Activated CD4-positive, alpha-beta memory T cell treated with anti-CD3 and anti-CD28 coated beads, Interleukin-2, amount 10 ng/mL, durations not matched to agents 7 days and 5 days (primary cell): ENCODE measurements at regions of chr7 and their contacts with region 1.

Region 1: GRCh38 chr7:4775250-4775847 is at the start of gene AP5Z1:
- DNase-seq: peak; percentile 95
- H3K4me3 Mint-ChIP-seq: peak within 1 kb of the TSS; percentile 99
- H3K27ac Mint-ChIP-seq: peak within 1 kb of the TSS; percentile 96
- H3K4me1 Mint-ChIP-seq: peaks cover 43% of the 10 kb centered on the region
- H3K27me3 Mint-ChIP-seq: no peaks in the 10 kb centered on the region
- total RNA-seq, gene AP5Z1: 57.5 to 60.6 TPM

Region 2: DNA sequence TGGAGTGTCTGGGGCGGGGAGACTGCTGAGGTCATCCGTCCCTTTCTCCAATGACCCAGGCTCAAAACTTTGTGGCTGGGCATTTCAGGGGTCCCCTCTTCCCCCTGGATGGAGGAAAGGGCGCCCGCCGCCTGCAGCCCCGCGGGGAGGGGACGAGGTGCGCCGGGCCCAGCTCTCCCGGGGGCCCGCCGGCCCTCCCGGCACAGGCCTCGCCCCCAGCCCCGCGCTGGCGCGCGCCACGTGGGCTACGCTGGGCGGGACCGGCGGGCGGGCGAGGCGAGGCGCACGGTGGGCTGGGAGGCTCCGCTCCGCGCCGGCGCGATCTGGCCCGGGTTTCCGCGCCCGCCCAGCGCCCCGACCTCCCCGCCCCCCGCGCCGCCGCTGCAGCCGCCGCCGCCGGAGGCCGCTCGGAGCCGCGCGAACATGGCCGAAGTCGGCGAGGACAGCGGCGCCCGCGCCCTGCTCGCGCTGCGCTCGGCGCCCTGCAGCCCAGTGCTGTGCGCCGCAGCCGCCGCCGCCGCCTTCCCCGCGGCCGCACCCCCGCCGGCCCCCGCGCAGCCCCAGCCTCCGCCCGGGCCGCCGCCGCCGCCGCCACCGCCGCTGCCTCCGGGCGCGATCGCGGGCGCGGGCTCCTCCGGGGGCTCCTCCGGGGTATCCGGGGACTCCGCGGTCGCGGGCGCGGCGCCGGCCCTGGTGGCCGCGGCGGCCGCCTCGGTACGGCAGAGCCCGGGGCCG is 93.3 kb before region 1 on chr7 and contains the start of gene FOXK1:
- CTCF ChIA-PET with region 1: no interaction called
- POLR2A ChIA-PET with region 1: interaction called, 23 read pairs
- DNase-seq: peak; percentile 80
- H3K4me3 Mint-ChIP-seq: peak within 1 kb of the TSS; percentile 98
- H3K27ac Mint-ChIP-seq: peak within 1 kb of the TSS; percentile 99
- H3K4me1 Mint-ChIP-seq: peaks cover 24% of the 10 kb centered on the region
- H3K27me3 Mint-ChIP-seq: no peaks in the 10 kb centered on the region
- total RNA-seq, gene FOXK1: 32.7 to 33.2 TPM

Region 3: GRCh38 chr7:4744391-4745264 is 30.7 kb before region 1 on chr7:
- CTCF ChIA-PET with region 1: interaction called, 3 read pairs
- POLR2A ChIA-PET with region 1: interaction called, 79 read pairs
- DNase-seq: peak; percentile 81
- H3K4me3 Mint-ChIP-seq: peak overlapping the region; percentile 85
- H3K27ac Mint-ChIP-seq: peak overlapping the region; percentile 98
- H3K4me1 Mint-ChIP-seq: peaks cover 64% of the 10 kb centered on the region
- H3K27me3 Mint-ChIP-seq: no peaks in the 10 kb centered on the region

Region 4: DNA sequence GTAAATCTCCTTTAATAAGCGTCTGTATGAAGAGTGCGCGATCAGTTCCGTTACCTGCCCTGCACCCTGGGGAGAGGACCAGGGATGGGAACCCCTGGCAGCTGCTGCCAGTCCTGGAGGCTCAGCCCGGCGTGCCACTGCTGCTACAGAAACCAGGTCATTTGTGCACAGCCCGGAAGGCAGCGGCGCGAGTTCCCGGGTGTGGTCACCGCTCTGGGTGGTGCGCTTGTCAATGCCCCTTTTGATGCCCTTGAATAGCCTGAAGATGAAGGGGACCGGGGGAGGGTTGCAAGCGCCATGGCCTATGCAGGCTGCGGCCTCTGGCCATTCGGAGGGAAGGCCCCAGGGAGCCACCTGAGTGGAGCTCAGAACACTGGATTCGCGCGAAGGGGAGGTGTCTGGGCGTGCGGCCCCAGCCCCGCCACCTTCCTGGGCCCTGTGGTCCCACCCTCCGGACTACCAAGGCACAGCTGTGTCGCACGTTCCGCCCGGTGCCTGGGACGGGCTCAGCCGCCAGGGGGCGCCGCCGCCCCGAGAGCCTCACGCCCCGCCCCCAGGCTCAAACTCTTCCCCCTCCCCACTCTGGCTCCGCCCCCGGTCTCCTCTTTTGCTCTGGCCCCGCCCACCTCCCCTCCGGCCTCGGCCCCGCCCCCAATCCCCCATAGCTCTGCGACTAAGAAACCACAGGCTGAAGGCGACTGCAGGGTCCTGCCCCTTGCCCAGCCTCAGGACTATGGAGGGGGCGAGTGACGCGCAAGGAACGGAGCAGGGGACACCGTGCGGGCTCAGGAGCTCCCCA is 16.6 kb after region 1 on chr7:
- CTCF ChIA-PET with region 1: interaction called, 16 read pairs
- POLR2A ChIA-PET with region 1: interaction called, 49 read pairs
- DNase-seq: peak; percentile 75
- H3K4me3 Mint-ChIP-seq: no peak overlapping the region
- H3K27ac Mint-ChIP-seq: no peak overlapping the region
- H3K4me1 Mint-ChIP-seq: peaks cover 3% of the 10 kb centered on the region
- H3K27me3 Mint-ChIP-seq: no peaks in the 10 kb centered on the region

Region 5: GRCh38 chr7:4845740-4846142 is 70.4 kb after region 1 on chr7:
- CTCF ChIA-PET with region 1: no interaction called
- POLR2A ChIA-PET with region 1: no interaction called
- DNase-seq: no peak
- H3K4me3 Mint-ChIP-seq: no peak overlapping the region
- H3K27ac Mint-ChIP-seq: no peak overlapping the region
- H3K4me1 Mint-ChIP-seq: no peaks in the 10 kb centered on the region
- H3K27me3 Mint-ChIP-seq: peaks cover 4% of the 10 kb centered on the region

Region 6: GRCh38 chr7:4919969-4920766 is 144.8 kb after region 1 on chr7:
- CTCF ChIA-PET with region 1: no interaction called
- POLR2A ChIA-PET with region 1: no interaction called
- DNase-seq: no peak
- H3K4me3 Mint-ChIP-seq: no peak overlapping the region
- H3K27ac Mint-ChIP-seq: no peak overlapping the region
- H3K4me1 Mint-ChIP-seq: no peaks in the 10 kb centered on the region
- H3K27me3 Mint-ChIP-seq: no peaks in the 10 kb centered on the region

Region 7: GRCh38 chr7:4958477-4959301 is 183.3 kb after region 1 on chr7 and contains the start of gene MMD2:
- CTCF ChIA-PET with region 1: no interaction called
- POLR2A ChIA-PET with region 1: no interaction called
- DNase-seq: no peak
- H3K4me3 Mint-ChIP-seq: no peak within 1 kb of the TSS
- H3K27ac Mint-ChIP-seq: no peak within 1 kb of the TSS
- H3K4me1 Mint-ChIP-seq: peaks cover 3% of the 10 kb centered on the region
- H3K27me3 Mint-ChIP-seq: peaks cover 16% of the 10 kb centered on the region
- total RNA-seq, gene MMD2: not detected